Activated CD8-positive, alpha-beta T cell treated with anti-CD3 and anti-CD28 coated beads for 36 hours (primary cell): ENCODE measurements at regions of chr16 and their contacts with region 1.

Region 1: GRCh38 chr16:67017810-67018488 is 11.0 kb upstream of the CBFB start:
- DNase-seq: peak; percentile 95
- ATAC-seq: peak; percentile 87
- H3K4me3 Mint-ChIP-seq: no peak overlapping the region
- H3K27ac Mint-ChIP-seq: peak overlapping the region; percentile 52
- H3K4me1 Mint-ChIP-seq: peaks cover 17% of the 10 kb centered on the region
- H3K27me3 Mint-ChIP-seq: no peaks in the 10 kb centered on the region
- CTCF ChIP-seq: peak; percentile 78

Region 2: DNA sequence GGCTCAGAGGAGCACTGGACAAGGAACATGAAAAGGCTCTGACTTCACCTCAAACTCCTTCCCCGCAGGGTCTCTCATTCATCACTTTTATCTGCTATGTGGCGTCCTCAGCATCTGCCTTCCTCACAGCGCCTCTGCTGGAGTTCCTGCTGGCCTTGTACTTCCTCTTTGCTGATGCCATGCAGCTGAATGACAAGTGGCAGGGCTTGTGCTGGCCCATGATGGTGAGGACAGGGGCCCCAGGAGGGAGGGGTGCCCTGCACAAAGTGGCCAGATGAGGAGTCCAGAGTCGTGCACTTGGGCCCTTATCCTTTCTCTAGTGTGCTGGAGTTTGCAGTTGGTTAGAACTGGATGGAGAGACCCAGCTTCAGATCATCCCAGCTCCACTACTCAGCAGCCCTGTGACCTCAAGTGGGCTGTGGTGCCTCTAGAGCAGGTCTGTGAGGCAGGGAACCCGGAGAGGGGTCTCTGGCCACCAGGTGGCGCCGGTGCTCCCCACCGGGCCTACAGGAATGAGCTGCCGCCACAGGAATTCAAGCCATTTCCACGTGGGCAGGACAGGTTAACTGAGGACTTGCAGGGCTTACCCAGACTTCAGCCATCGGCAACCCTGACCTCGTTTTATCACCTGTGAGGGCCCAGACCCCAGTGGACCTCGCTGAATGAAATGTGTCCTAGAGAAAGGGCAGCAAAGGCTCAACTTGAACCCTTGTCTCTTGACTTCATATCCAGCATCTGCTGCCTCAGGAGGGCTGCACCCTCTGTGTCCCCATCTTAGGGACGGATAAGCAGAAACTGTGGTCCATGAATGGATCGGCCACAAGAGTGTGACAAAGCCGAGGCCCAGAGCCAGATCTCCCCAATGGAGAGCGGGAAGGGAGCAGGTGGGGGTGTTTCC is 409.5 kb before region 1 on chr16:
- CTCF ChIA-PET with region 1: no interaction called
- POLR2A ChIA-PET with region 1: no interaction called
- intact Hi-C with region 1: no loop called
- DNase-seq: peak; percentile 92
- ATAC-seq: peak; percentile 31
- H3K4me3 Mint-ChIP-seq: no peak overlapping the region
- H3K27ac Mint-ChIP-seq: peak overlapping the region; percentile 71
- H3K4me1 Mint-ChIP-seq: peaks cover 35% of the 10 kb centered on the region
- H3K27me3 Mint-ChIP-seq: no peaks in the 10 kb centered on the region
- CTCF ChIP-seq: peak; percentile 85

Region 3: GRCh38 chr16:66983033-66983432 is 34.9 kb before region 1 on chr16:
- CTCF ChIA-PET with region 1: interaction called, 53 read pairs
- POLR2A ChIA-PET with region 1: interaction called, 12 read pairs
- intact Hi-C with region 1: loop called (anchors 5 kb)
- DNase-seq: no peak
- ATAC-seq: no peak
- H3K4me3 Mint-ChIP-seq: no peak overlapping the region
- H3K27ac Mint-ChIP-seq: peak overlapping the region; percentile 99
- H3K4me1 Mint-ChIP-seq: peaks cover 59% of the 10 kb centered on the region
- H3K27me3 Mint-ChIP-seq: no peaks in the 10 kb centered on the region
- CTCF ChIP-seq: no peak

Region 4: GRCh38 chr16:67006930-67007658 is 10.9 kb before region 1 on chr16:
- CTCF ChIA-PET with region 1: interaction called, 10 read pairs
- POLR2A ChIA-PET with region 1: interaction called, 18 read pairs
- intact Hi-C with region 1: no loop called
- DNase-seq: no peak
- ATAC-seq: no peak
- H3K4me3 Mint-ChIP-seq: no peak overlapping the region
- H3K27ac Mint-ChIP-seq: no peak overlapping the region
- H3K4me1 Mint-ChIP-seq: peaks cover 7% of the 10 kb centered on the region
- H3K27me3 Mint-ChIP-seq: no peaks in the 10 kb centered on the region
- CTCF ChIP-seq: no peak

Region 5: GRCh38 chr16:67084345-67085028 is 66.5 kb after region 1 on chr16:
- CTCF ChIA-PET with region 1: interaction called, 18 read pairs
- POLR2A ChIA-PET with region 1: interaction called, 3 read pairs
- intact Hi-C with region 1: no loop called
- DNase-seq: no peak
- ATAC-seq: no peak
- H3K4me3 Mint-ChIP-seq: no peak overlapping the region
- H3K27ac Mint-ChIP-seq: no peak overlapping the region
- H3K4me1 Mint-ChIP-seq: peaks cover 5% of the 10 kb centered on the region
- H3K27me3 Mint-ChIP-seq: no peaks in the 10 kb centered on the region
- CTCF ChIP-seq: no peak

Region 6: DNA sequence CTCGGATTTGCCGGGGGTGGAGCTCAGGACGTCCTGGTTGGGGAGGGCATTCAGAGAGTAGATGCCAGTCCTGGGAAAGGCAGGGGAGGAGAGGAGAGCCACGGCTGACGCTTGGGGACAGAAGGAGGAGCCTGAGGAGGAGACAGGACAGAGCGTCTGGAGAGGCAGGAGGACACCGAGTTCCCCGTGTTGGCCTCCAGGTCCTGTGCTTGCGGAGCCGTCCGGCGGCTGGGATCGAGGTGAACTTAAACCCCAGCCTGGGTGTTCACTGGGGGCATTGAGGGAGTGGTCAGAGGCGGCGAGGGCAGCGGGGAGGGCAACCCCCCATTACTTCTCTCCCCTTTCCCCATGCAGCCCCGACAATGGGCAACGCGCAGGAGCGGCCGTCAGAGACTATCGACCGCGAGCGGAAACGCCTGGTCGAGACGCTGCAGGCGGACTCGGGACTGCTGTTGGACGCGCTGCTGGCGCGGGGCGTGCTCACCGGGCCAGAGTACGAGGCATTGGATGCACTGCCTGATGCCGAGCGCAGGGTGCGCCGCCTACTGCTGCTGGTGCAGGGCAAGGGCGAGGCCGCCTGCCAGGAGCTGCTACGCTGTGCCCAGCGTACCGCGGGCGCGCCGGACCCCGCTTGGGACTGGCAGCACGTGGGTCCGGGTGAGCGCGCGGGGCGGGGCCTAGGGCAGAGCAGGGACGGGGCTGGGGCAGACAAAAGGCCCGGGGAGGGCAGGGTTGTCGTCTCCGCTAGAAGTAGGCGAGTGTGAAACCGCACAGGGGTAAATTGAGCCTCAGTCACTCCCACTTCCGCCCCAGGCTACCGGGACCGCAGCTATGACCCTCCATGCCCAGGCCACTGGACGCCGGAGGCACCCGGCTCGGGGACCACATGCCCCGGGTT is 156.1 kb after region 1 on chr16:
- CTCF ChIA-PET with region 1: interaction called, 14 read pairs
- POLR2A ChIA-PET with region 1: interaction called, 3 read pairs
- intact Hi-C with region 1: no loop called
- DNase-seq: peak; percentile 85
- ATAC-seq: peak; percentile 50
- H3K4me3 Mint-ChIP-seq: peak overlapping the region; percentile 85
- H3K27ac Mint-ChIP-seq: peak overlapping the region; percentile 34
- H3K4me1 Mint-ChIP-seq: peaks cover 55% of the 10 kb centered on the region
- H3K27me3 Mint-ChIP-seq: peaks cover 67% of the 10 kb centered on the region
- CTCF ChIP-seq: peak; percentile 19

Region 7: GRCh38 chr16:67441271-67441753 is 423.4 kb after region 1 on chr16:
- CTCF ChIA-PET with region 1: no interaction called
- POLR2A ChIA-PET with region 1: no interaction called
- intact Hi-C with region 1: no loop called
- DNase-seq: no peak
- ATAC-seq: no peak
- H3K4me3 Mint-ChIP-seq: no peak overlapping the region
- H3K27ac Mint-ChIP-seq: no peak overlapping the region
- H3K4me1 Mint-ChIP-seq: peaks cover 5% of the 10 kb centered on the region
- H3K27me3 Mint-ChIP-seq: no peaks in the 10 kb centered on the region
- CTCF ChIP-seq: no peak